AG04449 (cell line): ENCODE measurements at regions of chr21 and their contacts with region 1.

Region 1: DNA sequence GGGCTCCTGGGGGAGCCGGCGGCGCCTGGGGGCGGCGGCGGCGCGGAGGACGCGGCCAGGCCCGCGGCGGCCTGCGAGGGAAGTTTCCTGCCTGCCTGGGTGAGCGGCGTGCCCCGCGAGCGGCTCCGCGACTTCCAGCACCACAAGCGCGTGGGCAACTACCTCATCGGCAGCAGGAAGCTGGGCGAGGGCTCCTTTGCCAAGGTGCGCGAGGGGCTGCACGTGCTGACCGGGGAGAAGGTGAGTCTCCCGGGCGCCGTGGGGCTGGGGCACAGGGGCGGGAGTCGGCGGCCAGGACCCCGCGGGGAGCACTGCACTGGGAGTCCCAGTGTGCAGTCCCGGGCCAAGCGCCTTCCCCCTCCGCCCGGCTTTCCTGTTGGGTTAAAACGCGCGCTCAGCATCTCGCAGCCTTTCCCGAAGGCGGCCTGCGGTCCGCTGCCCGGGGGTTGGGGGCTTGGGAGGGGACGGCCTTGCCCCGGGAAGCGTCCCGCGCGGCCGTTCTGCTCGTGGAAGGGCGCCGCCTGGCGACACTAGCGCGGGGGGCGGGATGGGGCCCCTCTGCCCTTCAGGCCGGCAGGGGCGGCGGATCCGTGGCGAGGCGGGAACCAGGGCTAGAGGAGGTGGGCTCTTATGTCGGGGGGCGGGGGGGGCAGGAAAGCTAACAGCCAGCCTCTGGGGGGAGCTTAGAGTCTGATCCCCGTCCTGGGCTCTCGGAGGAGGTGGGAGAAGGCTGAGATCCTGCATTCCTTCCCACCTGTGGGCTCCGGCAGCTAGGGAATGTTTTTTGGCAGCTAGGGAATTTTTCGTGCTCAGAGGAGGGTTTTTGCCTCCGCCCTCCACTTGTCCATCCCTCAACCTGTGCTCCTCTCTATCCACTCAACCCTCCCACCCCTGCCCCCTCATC is 1.1 kb downstream of the HUNK start:
- DNase-seq: no peak
- H3K4me3 ChIP-seq: peak overlapping the region; percentile 62
- CTCF ChIP-seq: peak; percentile 68

Region 2: GRCh38 chr21:31888936-31889371 is 15.0 kb after region 1 on chr21:
- CTCF ChIA-PET with region 1: interaction called, 11 read pairs
- POLR2A ChIA-PET with region 1: no interaction called
- DNase-seq: no peak
- H3K4me3 ChIP-seq: no peak overlapping the region
- CTCF ChIP-seq: no peak

Region 3: DNA sequence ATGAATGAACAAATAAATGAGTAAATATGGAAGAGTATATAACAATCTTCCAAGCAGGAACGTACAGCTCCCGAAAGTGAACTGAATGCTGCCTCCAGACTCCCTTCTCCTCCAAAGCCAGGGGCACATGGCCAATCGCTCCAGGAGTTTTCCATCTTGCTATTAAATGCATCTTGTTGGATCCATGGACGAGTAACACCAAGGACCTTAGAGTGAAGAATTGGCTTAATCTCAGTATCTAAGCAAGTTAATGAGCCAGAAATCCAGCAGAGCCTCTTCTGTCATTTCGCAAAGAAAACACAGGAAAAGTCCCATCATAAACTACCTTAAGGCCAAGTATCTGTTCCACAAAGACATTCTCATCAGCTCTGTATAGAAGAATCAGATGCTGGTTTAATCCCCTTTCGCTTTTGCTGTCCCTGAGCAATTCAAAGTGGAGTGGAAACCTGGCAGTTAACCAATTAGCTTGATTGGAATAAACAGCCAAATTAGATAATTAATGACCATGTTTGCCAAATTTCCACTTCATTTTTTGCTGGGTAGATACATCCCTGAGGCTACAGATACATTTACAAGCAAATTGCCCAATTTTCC is 288.9 kb after region 1 on chr21:
- CTCF ChIA-PET with region 1: no interaction called
- POLR2A ChIA-PET with region 1: no interaction called
- DNase-seq: no peak
- H3K4me3 ChIP-seq: no peak overlapping the region
- CTCF ChIP-seq: no peak